Posterior vena cava (tissue), 2 donors: ENCODE measurements at regions of chr12 and their contacts with region 1.

Region 1: DNA sequence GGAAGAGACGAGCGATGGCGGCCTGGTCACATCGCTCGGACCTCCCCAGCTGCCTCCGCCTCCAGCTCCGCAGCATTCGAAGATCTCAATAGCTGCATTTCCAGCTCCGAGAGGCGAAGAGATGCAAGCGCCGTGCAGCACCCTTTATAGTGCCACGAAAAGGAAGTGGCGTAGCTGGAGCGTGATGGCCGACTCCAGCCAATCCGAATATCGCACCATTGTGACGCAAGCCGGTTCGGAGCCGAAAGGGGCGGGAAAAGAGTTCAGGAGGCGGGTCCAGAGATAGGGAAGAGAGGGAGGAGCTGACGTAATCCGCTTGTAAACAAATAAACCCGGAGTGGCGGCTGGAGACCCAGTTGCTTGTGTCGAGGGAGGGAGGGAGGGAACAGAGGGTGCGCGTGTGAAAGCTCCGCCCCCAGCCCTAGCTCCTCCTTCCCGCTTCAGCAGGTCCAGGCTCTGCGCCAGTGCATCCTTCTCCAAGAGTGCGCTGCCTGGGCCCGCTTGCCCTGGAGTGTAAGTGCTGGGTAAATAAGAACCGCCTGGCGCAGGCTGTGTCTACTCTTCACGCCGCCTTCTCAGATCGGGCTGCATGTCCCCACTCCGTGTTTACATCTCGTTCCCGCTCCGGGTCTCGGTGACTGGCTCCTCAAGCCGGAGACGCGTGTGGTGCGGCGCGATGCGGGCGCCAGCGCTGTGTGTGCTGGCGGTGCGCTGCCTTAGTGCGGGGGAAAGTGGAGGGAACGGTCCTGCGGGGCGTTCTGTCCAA is at the start of gene BTG1:
- DNase-seq: peak; percentile 99
- total RNA-seq, gene BTG1: 78.5 to 81.8 TPM

Region 2: DNA sequence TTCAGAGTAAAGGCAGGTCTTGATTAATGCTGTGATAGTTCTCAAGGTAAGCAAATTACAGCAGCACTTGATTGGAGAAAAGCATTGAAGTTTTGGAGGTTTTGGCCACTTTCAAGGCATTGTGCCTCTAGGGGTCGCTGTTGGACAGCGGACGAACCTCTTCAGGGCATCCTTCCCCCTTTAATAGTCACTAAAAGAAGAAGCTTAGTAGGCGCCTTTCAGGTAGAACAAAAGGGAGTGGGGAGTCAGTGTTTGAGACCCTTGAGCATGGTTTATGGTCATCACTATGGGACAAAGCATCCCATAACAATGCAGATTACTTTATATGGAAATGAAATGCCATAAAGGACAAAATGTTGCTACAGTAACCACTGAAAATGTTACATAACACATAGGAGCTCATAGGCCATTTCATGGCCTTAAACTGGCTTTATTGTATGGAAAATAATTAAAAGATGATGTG is 763.8 kb before region 1 on chr12:
- intact Hi-C with region 1: loop called in 1 of 2 experiments (anchors 10 kb)
- DNase-seq: peak; percentile 93

Region 3: DNA sequence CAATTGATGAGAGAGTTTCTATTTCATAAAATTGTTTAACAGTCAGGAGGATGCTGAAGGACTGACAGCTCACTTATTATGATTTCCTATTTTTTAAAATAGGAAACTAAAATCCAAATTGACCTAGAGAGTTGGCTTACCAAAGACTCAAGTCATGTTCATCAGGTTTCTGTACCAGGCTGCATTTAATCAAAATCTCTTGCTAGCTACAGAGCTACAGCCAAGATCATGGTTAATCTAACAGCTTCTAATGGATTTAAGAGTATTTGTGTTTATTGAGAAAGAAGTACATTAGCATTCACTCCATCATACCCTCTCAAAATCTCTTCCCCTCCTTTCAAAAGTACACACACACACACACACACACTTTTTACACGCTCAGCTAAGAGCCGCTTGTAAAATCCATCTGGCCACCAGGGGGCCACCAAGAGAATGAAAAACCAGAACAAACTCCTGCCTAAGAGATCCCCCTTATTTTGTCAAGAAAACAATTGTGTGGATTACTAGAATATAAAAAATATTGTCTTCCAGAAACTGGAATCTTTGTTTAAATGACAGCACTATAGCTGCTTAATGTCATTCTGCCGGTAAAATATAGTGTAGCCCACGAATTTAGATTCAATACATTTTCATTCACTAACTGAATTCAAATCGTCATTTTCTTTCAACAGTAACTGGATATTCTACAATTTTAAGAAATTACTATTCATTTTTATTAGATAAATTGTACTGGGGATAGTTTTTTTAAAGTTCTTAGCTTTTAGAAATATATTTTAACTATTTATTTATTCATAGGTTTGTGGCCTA is 334.2 kb before region 1 on chr12:
- intact Hi-C with region 1: loop called in 1 of 2 experiments (anchors 10 kb)
- DNase-seq: peak; percentile 90

Region 4: DNA sequence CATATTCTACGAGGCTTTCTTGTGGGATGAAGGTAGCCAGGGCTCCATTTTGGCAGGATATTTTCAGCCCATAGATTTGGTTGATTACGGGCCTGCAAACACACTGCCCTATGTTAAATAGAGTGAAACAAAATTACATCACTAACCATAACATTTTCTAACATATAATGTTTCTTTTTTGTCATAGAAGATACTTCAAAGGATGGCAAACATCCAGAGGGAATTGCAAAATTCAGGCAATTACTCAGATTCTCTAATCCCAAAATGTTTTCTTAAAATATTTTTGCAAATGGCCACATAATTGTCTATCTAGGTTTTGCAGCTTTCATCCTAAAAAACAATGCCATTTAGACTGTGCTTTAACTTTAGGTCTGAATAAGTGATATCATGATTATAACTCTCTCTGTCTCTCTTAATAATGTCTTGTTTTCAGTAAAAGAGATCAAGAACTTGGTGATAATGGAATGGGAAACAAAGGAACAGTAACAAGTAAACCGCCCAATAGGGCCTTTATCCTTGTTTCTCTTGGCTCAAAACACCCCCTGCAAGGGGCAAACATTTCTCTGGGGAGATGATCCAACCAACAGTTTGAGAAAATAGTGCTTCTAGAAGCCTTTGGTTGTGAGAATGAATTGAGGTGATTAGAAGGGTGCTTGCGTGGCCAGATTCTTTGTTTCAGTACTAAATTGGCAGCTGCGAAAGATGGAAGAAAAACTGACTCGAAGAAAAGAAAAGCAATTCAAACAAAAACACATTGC is 54.1 kb after region 1 on chr12:
- intact Hi-C with region 1: no loop called
- DNase-seq: no peak

Region 5: DNA sequence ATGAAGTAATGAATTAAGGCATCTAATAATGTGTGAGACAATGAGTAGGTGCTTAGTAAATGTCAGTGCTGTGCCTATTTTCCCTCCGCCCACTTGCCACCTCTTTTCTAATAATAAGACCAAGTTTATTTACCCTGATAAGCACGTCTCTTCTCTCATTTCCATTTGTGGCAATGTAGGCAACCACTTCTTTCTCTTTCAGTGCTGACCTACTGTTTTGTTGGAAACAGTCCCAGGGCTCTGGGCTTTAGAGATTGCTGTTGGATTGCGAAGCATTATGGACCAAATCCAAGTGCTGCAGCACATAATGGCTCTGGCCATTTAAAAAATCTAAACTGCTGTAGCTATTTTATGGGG is 415.6 kb after region 1 on chr12:
- intact Hi-C with region 1: loop called (anchors 5 to 10 kb)
- DNase-seq: no peak